ENCODE measurements at regions of chr2 and their contacts with region 1.

Region 1: DNA sequence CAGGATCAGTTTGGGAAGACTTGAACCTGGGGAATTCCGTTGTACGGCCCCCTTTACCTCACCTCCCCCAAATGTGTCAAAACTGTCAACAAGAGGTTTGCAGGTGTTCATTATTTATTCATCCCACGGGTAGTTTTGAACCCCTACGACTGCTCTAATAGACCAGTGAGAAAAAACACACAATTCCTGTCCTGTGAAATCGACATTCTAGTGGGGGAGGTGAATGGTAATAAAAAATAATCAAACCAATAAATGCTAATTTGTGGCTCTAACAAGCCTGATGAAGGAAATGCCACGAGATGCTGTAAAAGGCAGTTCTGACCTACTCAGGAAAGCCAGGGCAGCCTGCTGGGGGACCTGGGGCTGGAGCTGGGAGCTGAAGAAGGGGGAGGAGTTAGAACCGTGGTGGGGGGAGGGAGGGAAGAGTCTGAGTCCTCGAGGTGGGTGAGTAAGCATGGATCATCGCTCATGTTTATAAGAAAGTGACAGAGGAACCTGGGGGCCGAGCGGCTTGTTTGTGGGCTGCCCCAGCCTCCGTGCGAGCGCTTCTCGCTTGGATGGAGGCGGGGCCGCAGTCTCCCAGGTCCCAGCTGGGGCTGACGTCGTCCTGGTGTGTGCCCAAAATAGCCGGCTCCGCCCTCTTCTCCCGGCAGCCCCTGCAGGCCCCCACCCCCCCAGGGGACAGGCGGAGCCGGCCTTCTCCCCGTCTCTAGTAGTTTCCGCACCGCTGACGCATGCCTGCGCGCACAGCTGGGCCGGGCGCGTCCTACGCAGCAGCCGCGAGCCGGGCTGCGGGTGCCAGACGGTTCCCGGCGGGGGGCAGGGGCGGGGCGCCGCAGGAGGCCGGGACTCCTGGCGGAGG is at the start of gene DNAJB2:
- DNase-seq: peak; percentile 99
- H3K4me3 Mint-ChIP-seq: peak within 1 kb of the TSS; percentile 96
- H3K27ac Mint-ChIP-seq: peak within 1 kb of the TSS; percentile 99
- H3K4me1 Mint-ChIP-seq: peaks cover 41% of the 10 kb centered on the region
- H3K27me3 Mint-ChIP-seq: no peaks in the 10 kb centered on the region
- total RNA-seq, gene DNAJB2: 38.2 to 40.9 TPM

Region 2: GRCh38 chr2:219182331-219183150 is 96.3 kb before region 1 on chr2:
- CTCF ChIA-PET with region 1: no interaction called
- POLR2A ChIA-PET with region 1: no interaction called
- DNase-seq: no peak
- H3K4me3 Mint-ChIP-seq: peak overlapping the region; percentile 24
- H3K27ac Mint-ChIP-seq: peak overlapping the region; percentile 72
- H3K4me1 Mint-ChIP-seq: peaks cover 63% of the 10 kb centered on the region
- H3K27me3 Mint-ChIP-seq: no peaks in the 10 kb centered on the region

Region 3: DNA sequence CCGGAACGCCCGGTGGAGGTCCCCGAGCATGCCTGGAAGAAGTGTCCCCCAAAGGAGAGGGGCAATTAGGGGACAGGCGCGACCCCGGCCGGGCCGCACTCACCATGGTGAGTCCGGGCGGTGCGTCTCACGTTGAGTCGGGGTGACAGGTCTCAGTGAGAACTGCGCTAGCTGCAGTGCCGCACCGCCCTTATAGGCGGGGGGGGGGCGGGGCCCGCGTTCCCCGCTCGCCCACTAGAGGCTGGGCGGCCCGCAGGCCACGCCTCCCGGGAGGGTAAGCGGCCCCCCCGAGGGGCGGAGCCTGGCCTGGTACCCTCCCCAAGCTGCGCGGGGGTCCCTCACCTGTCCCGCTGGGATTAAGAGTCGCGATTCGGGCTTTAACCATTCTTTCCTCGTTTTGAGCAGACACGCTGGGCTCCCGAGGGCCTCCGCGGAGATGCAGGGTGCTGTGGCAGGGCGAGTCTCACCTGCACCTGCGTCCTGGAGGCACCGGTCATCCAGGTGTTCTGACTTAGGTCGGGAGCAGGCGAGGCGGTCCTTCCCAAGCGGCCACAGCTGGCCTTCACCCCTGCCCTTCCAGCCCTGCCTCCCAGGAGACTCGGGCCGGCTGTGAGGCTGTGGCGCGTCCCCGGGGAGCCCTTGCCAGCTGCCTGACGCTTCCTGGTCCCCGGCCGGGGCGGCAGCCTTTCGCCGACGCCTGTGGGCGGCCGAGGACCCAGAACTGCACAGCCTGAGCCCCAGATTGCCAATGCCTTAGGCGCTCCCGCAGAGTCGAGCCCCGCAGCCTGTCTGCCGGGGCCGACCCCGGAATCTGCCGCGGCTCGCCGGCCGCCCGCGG is 24.9 kb before region 1 on chr2 and contains the start of gene TUBA4A:
- CTCF ChIA-PET with region 1: interaction called, 71 read pairs
- POLR2A ChIA-PET with region 1: interaction called, 6 read pairs
- DNase-seq: peak; percentile 91
- H3K4me3 Mint-ChIP-seq: peak within 1 kb of the TSS; percentile 99
- H3K27ac Mint-ChIP-seq: peak within 1 kb of the TSS; percentile 93
- H3K4me1 Mint-ChIP-seq: peaks cover 50% of the 10 kb centered on the region
- H3K27me3 Mint-ChIP-seq: no peaks in the 10 kb centered on the region
- total RNA-seq, gene TUBA4A: 261 to 339 TPM

Region 4: DNA sequence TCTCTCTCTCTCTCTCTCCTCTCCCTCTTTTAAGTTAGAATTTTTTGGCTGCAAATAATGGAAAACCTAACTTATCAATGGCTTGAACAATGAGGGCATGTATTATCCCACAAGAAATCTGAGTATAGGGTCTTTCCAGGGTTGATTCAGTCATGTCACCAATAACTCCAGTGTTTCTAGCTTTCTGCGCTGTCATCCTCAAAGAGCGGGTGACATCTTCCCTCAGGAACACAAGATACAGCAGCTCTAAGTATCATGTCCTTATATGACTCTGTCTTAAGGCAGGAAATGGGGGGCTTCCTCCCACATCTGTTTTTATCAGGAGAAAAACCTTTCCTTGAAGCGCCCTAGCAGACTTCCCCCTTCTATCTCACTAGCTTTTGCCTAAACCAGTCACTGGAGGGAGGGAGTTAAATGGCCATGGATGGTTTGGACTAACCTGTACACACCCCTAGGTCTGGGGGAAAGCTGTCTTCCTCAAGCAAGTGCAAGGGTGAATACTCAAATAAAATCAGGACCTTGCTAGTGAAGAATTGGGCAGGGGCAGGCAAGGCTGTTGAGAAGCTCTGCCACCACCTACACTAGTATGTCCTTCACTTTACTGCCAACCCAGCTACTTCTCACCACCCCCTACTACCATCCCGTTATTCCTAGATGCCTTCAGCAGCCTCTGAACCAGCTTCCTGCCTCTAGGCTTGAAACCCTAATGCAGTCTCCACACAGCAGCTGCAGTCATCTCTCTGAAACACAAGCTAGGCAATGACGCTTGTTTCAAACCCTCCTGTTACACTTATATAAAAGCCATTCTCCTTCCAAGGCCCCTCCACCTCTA is 17.6 kb before region 1 on chr2:
- CTCF ChIA-PET with region 1: interaction called, 71 read pairs
- POLR2A ChIA-PET with region 1: no interaction called
- DNase-seq: no peak
- H3K4me3 Mint-ChIP-seq: no peak overlapping the region
- H3K27ac Mint-ChIP-seq: no peak overlapping the region
- H3K4me1 Mint-ChIP-seq: no peaks in the 10 kb centered on the region
- H3K27me3 Mint-ChIP-seq: peaks cover 17% of the 10 kb centered on the region

Region 5: GRCh38 chr2:219418155-219418569 is 139.3 kb after region 1 on chr2 and contains the start of gene DES:
- CTCF ChIA-PET with region 1: no interaction called
- POLR2A ChIA-PET with region 1: no interaction called
- DNase-seq: no peak
- H3K4me3 Mint-ChIP-seq: no peak within 1 kb of the TSS
- H3K27ac Mint-ChIP-seq: no peak within 1 kb of the TSS
- H3K4me1 Mint-ChIP-seq: peaks cover 5% of the 10 kb centered on the region
- H3K27me3 Mint-ChIP-seq: peaks cover 39% of the 10 kb centered on the region
- total RNA-seq, gene DES: not detected

Region 6: GRCh38 chr2:219484343-219485200 is 205.7 kb after region 1 on chr2:
- CTCF ChIA-PET with region 1: no interaction called
- POLR2A ChIA-PET with region 1: no interaction called
- DNase-seq: no peak
- H3K4me3 Mint-ChIP-seq: no peak overlapping the region
- H3K27ac Mint-ChIP-seq: no peak overlapping the region
- H3K4me1 Mint-ChIP-seq: peaks cover 2% of the 10 kb centered on the region
- H3K27me3 Mint-ChIP-seq: peaks cover 39% of the 10 kb centered on the region

Region 7: GRCh38 chr2:219571311-219572236 is 292.7 kb after region 1 on chr2 and contains the start of gene OBSL1:
- CTCF ChIA-PET with region 1: no interaction called
- POLR2A ChIA-PET with region 1: no interaction called
- DNase-seq: no peak
- H3K4me3 Mint-ChIP-seq: no peak within 1 kb of the TSS
- H3K27ac Mint-ChIP-seq: no peak within 1 kb of the TSS
- H3K4me1 Mint-ChIP-seq: no peaks in the 10 kb centered on the region
- H3K27me3 Mint-ChIP-seq: peaks cover 31% of the 10 kb centered on the region
- total RNA-seq, gene OBSL1: not detected

Measured in activated CD4-positive, alpha-beta T cell treated with anti-CD3 and anti-CD28 coated beads, Interleukin-2, amount 10 ng/mL, durations not matched to agents 7 days and 5 days (primary cell).